Calu3 (cell line): ENCODE measurements at regions of chr17 and their contacts with region 1.

Region 1: DNA sequence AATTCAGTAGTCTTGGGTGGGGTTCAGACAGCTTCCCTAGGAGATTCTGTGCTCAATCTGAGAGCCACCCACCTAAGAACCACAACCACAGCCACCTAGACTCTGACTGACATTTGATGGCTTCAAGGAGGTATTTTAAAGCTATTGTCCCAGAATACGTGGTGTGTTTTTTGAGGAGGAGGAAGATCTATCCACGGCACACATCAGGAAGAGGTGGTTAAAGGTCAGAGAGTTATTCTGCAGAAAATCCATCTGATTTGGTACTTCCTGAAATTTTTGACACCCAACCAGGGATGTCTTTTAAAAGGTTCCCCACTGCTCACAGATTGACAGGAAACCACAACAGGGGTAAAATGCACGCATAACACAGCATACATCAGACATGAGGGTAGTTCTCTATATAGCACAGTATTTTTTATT is 25.1 kb downstream of the SMARCE1 start:
- DNase-seq: peak; percentile 3
- H3K4me3 Mint-ChIP-seq: no peak overlapping the region
- H3K27ac Mint-ChIP-seq: no peak overlapping the region
- H3K4me1 Mint-ChIP-seq: peaks cover 14% of the 10 kb centered on the region
- H3K27me3 Mint-ChIP-seq: peaks cover 56% of the 10 kb centered on the region
- CTCF ChIP-seq: no peak

Region 2: DNA sequence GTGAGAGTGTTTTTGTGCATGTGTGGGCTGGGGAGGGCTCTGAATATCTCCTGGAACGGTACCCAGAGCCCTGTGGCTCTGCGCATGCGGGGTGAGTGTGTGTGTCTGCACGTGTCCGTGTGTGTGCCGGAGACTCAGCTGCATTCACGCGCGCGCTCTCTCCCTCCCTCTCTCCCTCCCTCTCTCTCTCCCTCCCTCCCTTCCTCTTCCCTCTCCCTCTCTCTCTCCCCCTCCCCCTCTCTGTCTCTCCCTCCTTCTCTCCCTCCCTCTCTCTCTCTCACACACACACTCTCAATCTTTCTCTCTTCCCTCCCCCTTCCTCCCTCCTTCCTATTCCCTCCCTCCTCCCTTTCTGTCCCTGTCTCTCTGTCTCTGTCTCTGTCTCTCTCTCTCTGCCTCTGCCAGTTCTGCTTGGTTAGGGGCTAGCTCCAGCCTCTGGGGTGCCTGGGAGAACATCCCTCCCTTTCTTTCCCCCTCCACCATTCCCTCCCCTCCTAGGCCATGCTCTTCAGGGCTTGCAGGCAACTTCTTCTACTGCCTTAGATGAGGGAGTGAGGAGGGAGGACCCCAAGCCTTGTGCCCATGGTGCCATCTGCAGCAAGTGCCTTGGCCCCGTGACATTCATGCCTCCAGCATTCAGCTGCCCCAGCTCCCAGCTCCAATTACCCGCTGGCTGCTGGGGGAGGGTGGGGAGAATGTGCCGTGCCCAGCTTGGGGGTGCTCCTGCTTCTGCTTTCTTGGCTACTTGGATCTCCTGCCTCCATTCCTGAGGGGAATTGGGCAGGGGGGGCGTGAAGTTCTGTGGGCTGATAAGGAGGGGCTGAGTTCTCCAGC is 553.4 kb before region 1 on chr17:
- CTCF ChIA-PET with region 1: interaction called, 11 read pairs
- intact Hi-C with region 1: no loop called
- DNase-seq: peak; percentile 71
- H3K4me3 Mint-ChIP-seq: peak overlapping the region; percentile 63
- H3K27ac Mint-ChIP-seq: no peak overlapping the region
- H3K4me1 Mint-ChIP-seq: peaks cover 94% of the 10 kb centered on the region
- H3K27me3 Mint-ChIP-seq: no peaks in the 10 kb centered on the region
- CTCF ChIP-seq: no peak

Region 3: GRCh38 chr17:40340880-40341807 is 281.4 kb before region 1 on chr17:
- CTCF ChIA-PET with region 1: no interaction called
- intact Hi-C with region 1: no loop called
- DNase-seq: peak; percentile 100
- H3K4me3 Mint-ChIP-seq: peak overlapping the region; percentile 89
- H3K27ac Mint-ChIP-seq: peak overlapping the region; percentile 75
- H3K4me1 Mint-ChIP-seq: peaks cover 57% of the 10 kb centered on the region
- H3K27me3 Mint-ChIP-seq: no peaks in the 10 kb centered on the region
- CTCF ChIP-seq: peak; percentile 92

Region 4: GRCh38 chr17:40469805-40470675 is 152.5 kb before region 1 on chr17:
- CTCF ChIA-PET with region 1: no interaction called
- intact Hi-C with region 1: no loop called
- DNase-seq: no peak
- H3K4me3 Mint-ChIP-seq: no peak overlapping the region
- H3K27ac Mint-ChIP-seq: no peak overlapping the region
- H3K4me1 Mint-ChIP-seq: no peaks in the 10 kb centered on the region
- H3K27me3 Mint-ChIP-seq: peaks cover 93% of the 10 kb centered on the region
- CTCF ChIP-seq: no peak

Region 5: GRCh38 chr17:40564883-40565768 is 57.4 kb before region 1 on chr17 and contains the start of gene CCR7:
- CTCF ChIA-PET with region 1: interaction called, 50 read pairs
- intact Hi-C with region 1: no loop called
- DNase-seq: peak; percentile 43
- H3K4me3 Mint-ChIP-seq: no peak within 1 kb of the TSS
- H3K27ac Mint-ChIP-seq: no peak within 1 kb of the TSS
- H3K4me1 Mint-ChIP-seq: peaks cover 11% of the 10 kb centered on the region
- H3K27me3 Mint-ChIP-seq: peaks cover 93% of the 10 kb centered on the region
- CTCF ChIP-seq: no peak
- total RNA-seq, gene CCR7: not detected in 2 replicates

Region 6: DNA sequence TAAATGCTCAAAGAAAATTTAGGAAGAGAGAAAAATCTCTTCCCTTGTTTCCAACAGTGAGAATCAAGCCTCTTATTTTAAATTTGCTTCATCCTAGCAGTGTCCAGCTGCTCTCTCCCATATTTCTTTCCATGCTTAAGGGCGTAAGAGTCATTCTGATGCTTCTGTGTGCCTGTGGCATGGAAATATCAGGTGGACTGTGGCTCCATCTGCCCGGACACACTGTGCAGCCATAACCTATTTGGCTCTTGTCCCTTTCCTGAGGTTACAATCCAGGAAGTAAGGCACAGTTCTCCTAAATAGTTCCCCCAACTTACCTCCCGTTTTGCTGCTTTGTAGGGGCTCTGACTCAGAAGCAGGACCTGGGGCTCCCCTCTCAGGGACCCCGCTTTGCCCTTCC is 48.8 kb after region 1 on chr17:
- CTCF ChIA-PET with region 1: interaction called, 36 read pairs
- intact Hi-C with region 1: no loop called
- DNase-seq: peak; percentile 19
- H3K4me3 Mint-ChIP-seq: no peak overlapping the region
- H3K27ac Mint-ChIP-seq: no peak overlapping the region
- H3K4me1 Mint-ChIP-seq: peaks cover 5% of the 10 kb centered on the region
- H3K27me3 Mint-ChIP-seq: peaks cover 82% of the 10 kb centered on the region
- CTCF ChIP-seq: no peak

Region 7: GRCh38 chr17:40726919-40727318 is 104.4 kb after region 1 on chr17:
- CTCF ChIA-PET with region 1: interaction called, 36 read pairs
- intact Hi-C with region 1: loop called (anchors 1 kb)
- DNase-seq: peak; percentile 45
- H3K4me3 Mint-ChIP-seq: no peak overlapping the region
- H3K27ac Mint-ChIP-seq: no peak overlapping the region
- H3K4me1 Mint-ChIP-seq: peaks cover 19% of the 10 kb centered on the region
- H3K27me3 Mint-ChIP-seq: peaks cover 54% of the 10 kb centered on the region
- CTCF ChIP-seq: no peak

Region 8: GRCh38 chr17:40791787-40792436 is 169.4 kb after region 1 on chr17:
- CTCF ChIA-PET with region 1: interaction called, 42 read pairs
- intact Hi-C with region 1: loop called (anchors 1 kb)
- DNase-seq: peak; percentile 59
- H3K4me3 Mint-ChIP-seq: no peak overlapping the region
- H3K27ac Mint-ChIP-seq: no peak overlapping the region
- H3K4me1 Mint-ChIP-seq: no peaks in the 10 kb centered on the region
- H3K27me3 Mint-ChIP-seq: peaks cover 40% of the 10 kb centered on the region
- CTCF ChIP-seq: peak; percentile 100